B cell (primary cell): ENCODE measurements at regions of chr19 and their contacts with region 1.

Region 1: DNA sequence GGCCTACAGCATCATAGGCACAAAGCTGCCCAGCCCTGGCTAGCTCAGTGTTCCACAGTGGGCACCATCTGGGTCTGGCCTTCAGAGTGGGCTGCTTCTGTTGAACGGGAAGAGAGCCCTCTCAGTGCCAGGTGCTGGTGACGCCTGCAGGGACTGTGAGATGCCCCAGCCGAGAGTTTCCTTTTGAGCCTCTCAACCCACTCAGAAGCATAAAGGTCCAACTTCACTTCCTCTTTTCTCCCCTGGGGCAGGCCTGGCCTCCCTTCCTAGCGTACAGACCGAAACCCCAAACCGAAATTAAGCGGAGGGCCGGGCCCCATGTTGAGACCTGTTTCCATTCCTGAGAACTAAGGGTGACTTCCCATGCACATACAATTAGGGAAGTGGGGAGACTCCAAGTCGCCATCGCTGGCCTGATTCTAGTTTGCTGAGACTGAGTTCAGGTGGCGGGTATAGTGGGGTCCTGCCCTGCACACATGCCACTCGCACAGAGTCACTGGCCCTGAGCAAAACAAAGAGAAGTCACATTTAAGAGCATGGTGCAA is 6.9 kb downstream of the RAB8A start:
- DNase-seq: peak; percentile 93
- ATAC-seq: peak; percentile 91
- H3K4me3 ChIP-seq: peak overlapping the region in 3 of 5 experiments; percentile 11 to 48 (median 23)
- H3K4me3 Mint-ChIP-seq: peak overlapping the region; percentile 70
- H3K27ac ChIP-seq: peak overlapping the region; percentile 86 to 88
- H3K27ac Mint-ChIP-seq: peak overlapping the region; percentile 97
- H3K4me1 ChIP-seq: peaks cover 64 to 75% of the 10 kb centered on the region in 2 donors
- H3K4me1 Mint-ChIP-seq: peaks cover 66% of the 10 kb centered on the region
- H3K27me3 ChIP-seq: no peaks in the 10 kb centered on the region
- H3K27me3 Mint-ChIP-seq: no peaks in the 10 kb centered on the region
- CTCF ChIP-seq: no peak

Region 2: GRCh38 chr19:15091901-15092753 is 1026.4 kb before region 1 on chr19:
- CTCF ChIA-PET with region 1: no interaction called
- POLR2A ChIA-PET with region 1: interaction called, 13 read pairs
- intact Hi-C with region 1: no loop called
- DNase-seq: peak; percentile 82
- ATAC-seq: peak; percentile 66
- H3K4me3 ChIP-seq: no peak overlapping the region
- H3K4me3 Mint-ChIP-seq: no peak overlapping the region
- H3K27ac ChIP-seq: no peak overlapping the region
- H3K27ac Mint-ChIP-seq: no peak overlapping the region
- H3K4me1 ChIP-seq: peaks cover 4 to 6% of the 10 kb centered on the region in 2 donors
- H3K4me1 Mint-ChIP-seq: peaks cover 2% of the 10 kb centered on the region
- H3K27me3 ChIP-seq: peaks cover 0 to 4% (median 2%) of the 10 kb centered on the region in 4 experiments
- H3K27me3 Mint-ChIP-seq: peaks cover 28% of the 10 kb centered on the region
- CTCF ChIP-seq: peak; percentile 85

Region 3: DNA sequence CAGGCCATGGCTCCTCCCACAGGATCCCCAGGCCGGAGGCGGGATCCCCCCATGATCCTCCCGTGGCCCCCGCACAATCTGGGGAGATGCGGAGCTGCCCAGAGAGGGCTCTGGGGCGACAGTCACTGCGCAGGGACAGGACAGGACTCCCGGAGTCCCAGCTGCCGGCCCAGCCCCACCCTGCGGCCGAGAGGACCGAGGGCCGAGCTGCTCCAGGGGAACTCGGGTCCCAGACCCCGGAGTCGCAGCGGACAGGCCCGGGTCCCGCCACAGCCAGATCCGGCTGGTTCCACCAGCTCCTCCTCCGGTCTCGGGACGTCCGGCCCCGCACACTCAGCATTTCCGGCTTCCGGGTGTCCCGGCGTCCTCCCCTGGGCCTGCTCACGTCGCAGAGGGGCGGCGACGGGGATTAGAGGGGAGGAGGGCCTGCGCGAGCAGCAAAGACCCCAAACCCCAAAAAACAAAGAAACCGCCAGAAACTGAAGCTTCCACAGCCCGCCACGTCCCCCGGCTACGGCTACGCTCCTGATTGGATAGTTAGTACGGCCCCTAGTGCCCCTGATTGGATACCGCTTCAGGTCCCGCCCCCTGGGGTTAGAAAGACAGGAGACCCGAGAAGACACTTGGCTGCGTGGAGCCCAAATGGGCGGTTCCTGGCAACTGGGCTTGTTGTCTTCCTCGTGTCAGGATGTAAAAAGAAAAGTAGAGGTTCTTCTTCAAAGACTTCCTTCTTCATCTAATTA is 281.8 kb before region 1 on chr19:
- CTCF ChIA-PET with region 1: no interaction called
- POLR2A ChIA-PET with region 1: no interaction called
- intact Hi-C with region 1: loop called (anchors 2 kb)
- DNase-seq: peak; percentile 95
- ATAC-seq: peak; percentile 96
- H3K4me3 ChIP-seq: peak overlapping the region; percentile 83 to 98 (median 90)
- H3K4me3 Mint-ChIP-seq: peak overlapping the region; percentile 93
- H3K27ac ChIP-seq: peak overlapping the region; percentile 96 to 99
- H3K27ac Mint-ChIP-seq: peak overlapping the region; percentile 98
- H3K4me1 ChIP-seq: peaks cover 7 to 8% of the 10 kb centered on the region in 2 donors
- H3K4me1 Mint-ChIP-seq: peaks cover 12% of the 10 kb centered on the region
- H3K27me3 ChIP-seq: no peaks in the 10 kb centered on the region
- H3K27me3 Mint-ChIP-seq: no peaks in the 10 kb centered on the region
- CTCF ChIP-seq: no peak

Region 4: GRCh38 chr19:16041299-16041990 is 77.1 kb before region 1 on chr19:
- CTCF ChIA-PET with region 1: interaction called, 5 read pairs
- POLR2A ChIA-PET with region 1: no interaction called
- intact Hi-C with region 1: loop called (anchors 1 kb)
- DNase-seq: peak; percentile 80
- ATAC-seq: peak; percentile 86
- H3K4me3 ChIP-seq: no peak overlapping the region
- H3K4me3 Mint-ChIP-seq: no peak overlapping the region
- H3K27ac ChIP-seq: no peak overlapping the region
- H3K27ac Mint-ChIP-seq: no peak overlapping the region
- H3K4me1 ChIP-seq: peaks cover 7 to 8% of the 10 kb centered on the region in 2 donors
- H3K4me1 Mint-ChIP-seq: peaks cover 10% of the 10 kb centered on the region
- H3K27me3 ChIP-seq: peaks cover 0 to 4% (median 0%) of the 10 kb centered on the region in 4 experiments
- H3K27me3 Mint-ChIP-seq: no peaks in the 10 kb centered on the region
- CTCF ChIP-seq: peak; percentile 95

Region 5: GRCh38 chr19:16400911-16401591 is 282.5 kb after region 1 on chr19:
- CTCF ChIA-PET with region 1: no interaction called
- POLR2A ChIA-PET with region 1: no interaction called
- intact Hi-C with region 1: loop called (anchors 1 kb)
- DNase-seq: no peak
- ATAC-seq: no peak
- H3K4me3 ChIP-seq: no peak overlapping the region
- H3K4me3 Mint-ChIP-seq: no peak overlapping the region
- H3K27ac ChIP-seq: peak overlapping the region in 1 of 2 donors; percentile 27
- H3K27ac Mint-ChIP-seq: peak overlapping the region; percentile 64
- H3K4me1 ChIP-seq: peaks cover 44 to 58% of the 10 kb centered on the region in 2 donors
- H3K4me1 Mint-ChIP-seq: peaks cover 56% of the 10 kb centered on the region
- H3K27me3 ChIP-seq: no peaks in the 10 kb centered on the region
- H3K27me3 Mint-ChIP-seq: no peaks in the 10 kb centered on the region
- CTCF ChIP-seq: no peak